ENCODE measurements at regions of chr17 and their contacts with region 1.

Region 1: DNA sequence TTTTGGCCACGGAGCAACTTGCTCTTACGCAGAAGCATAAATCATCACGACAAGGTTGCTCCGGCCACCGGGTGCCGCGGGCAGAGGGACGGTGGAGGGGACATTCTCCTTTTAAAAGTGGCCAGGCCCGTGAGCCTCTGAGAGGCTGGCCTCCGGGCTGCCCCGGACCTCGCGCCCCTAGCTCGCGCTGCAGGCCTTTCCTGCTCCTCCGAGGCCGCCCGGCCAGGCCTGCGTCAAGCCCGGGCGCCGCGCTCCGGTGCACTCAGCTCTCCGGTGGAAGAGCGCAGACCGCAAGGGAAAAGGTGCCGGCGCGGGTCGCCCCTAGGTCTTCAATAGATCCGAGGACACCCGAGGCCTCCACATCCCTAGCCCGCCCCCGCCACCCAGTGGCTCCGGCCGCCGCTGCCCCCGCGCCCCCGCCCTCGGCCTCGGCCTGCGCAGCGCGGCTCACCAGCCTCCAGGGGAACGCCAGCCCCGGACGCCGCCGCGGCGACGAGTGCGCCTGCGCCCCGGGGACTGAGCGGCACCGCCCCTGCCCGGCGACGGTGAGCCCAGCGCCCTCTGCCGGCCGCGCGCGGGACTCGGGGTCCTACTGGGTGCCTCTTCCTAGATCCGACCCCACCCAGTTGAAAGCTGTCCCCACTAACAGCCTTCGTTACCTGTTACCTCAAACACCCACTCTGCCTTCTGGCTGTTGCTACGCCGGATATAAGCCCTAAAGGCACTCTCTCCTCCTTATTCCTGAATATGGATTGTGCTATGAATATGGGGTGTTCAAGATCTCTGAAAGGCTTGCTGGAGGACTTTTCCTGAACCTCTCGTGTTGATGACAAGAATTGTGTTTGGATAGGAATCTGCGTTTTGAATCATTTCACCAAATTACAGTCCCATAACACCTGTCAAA is at the start of gene LYRM9:
- DNase-seq: peak; percentile 93
- ATAC-seq: peak; percentile 99
- H3K4me3 Mint-ChIP-seq: peak within 1 kb of the TSS; percentile 77
- H3K27ac Mint-ChIP-seq: peak within 1 kb of the TSS; percentile 52
- H3K4me1 Mint-ChIP-seq: peaks cover 19% of the 10 kb centered on the region
- H3K27me3 Mint-ChIP-seq: peaks cover 30% of the 10 kb centered on the region
- total RNA-seq, gene LYRM9: 1.7 to 5.1 TPM

Region 2: DNA sequence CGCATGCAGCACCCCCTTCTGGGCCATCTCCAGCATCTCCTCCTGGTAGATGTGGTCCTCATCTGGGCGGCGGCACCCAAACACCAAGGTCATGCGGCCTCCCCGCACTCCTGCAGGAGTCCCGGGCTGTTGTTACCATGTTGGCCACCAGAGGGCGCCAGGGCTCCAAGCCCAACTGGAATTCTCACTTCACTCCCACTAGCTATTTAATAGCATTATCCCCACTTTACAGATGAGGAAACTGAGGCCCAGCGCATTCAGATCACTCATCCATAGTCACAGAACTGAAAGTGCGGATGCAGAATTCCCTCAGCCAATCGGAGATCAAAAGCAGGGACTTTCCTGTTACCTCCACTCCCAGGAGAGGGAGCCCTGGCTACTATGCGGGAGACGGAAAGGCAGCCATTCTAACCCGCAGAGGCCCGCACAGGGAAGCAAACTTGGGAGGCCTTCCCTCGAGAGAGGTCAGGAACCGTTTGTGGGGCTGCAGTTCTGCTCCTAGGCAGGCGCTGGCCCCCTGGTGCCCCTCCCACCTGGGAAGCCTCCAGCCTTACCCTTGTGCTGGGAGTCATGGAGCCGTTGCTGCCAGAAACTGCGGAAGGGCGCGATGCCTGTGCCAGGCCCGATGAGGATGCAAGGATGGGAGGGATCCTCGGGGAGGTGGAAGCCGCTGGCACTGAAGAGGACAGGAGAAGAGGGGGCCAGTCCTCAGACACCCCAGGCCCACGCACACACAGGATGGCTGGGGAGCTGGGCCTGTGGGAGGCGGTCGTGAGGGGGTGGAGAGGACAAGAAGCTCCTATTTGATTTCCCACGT is 132.8 kb before region 1 on chr17:
- CTCF ChIA-PET with region 1: interaction called, 10 read pairs
- DNase-seq: peak; percentile 77
- ATAC-seq: peak; percentile 63
- H3K4me3 Mint-ChIP-seq: no peak overlapping the region
- H3K27ac Mint-ChIP-seq: no peak overlapping the region
- H3K4me1 Mint-ChIP-seq: no peaks in the 10 kb centered on the region
- H3K27me3 Mint-ChIP-seq: no peaks in the 10 kb centered on the region

Region 3: DNA sequence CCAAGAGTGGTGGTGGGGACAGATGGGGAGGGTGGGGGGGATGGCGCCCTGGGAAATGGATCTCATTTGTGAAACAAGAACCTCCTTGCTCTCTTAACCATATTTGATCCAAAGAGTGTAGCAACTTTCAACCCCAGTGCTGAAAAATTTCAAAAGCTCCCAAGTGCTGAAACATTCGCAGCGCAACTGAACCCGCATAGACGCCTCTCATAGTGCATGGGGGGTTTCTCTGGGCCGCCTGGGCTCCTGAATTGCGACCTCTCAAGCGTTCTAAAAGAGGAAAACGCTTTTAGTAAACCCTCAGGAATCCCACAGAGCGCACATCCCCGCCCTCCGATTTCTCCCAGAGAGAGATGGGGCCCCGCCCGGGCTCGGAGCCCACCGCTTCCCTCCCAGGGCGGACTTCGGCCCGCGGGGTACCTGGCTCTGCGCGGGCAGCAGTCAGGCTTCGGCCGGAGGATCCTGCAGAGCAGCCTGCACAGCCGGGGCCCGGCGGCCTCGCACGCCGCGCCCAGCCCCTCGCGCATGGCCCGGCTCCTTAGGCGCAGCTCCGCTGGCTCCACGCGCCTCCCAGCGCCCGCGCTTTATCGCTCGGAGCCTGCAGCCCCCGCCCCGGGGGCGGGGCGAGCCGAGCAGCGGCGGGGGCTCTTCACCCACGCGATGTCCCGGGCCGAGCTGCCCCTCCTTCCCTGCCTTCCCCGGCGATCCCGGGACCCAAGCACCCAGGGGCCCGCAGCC is 99.8 kb before region 1 on chr17:
- CTCF ChIA-PET with region 1: interaction called, 13 read pairs
- DNase-seq: no peak
- ATAC-seq: peak; percentile 61
- H3K4me3 Mint-ChIP-seq: peak overlapping the region; percentile 33
- H3K27ac Mint-ChIP-seq: no peak overlapping the region
- H3K4me1 Mint-ChIP-seq: peaks cover 4% of the 10 kb centered on the region
- H3K27me3 Mint-ChIP-seq: peaks cover 43% of the 10 kb centered on the region

Region 4: GRCh38 chr17:28252436-28252835 is 359.3 kb after region 1 on chr17:
- CTCF ChIA-PET with region 1: interaction called, 10 read pairs
- DNase-seq: no peak
- ATAC-seq: no peak
- H3K4me3 Mint-ChIP-seq: no peak overlapping the region
- H3K27ac Mint-ChIP-seq: no peak overlapping the region
- H3K4me1 Mint-ChIP-seq: peaks cover 7% of the 10 kb centered on the region
- H3K27me3 Mint-ChIP-seq: peaks cover 16% of the 10 kb centered on the region